Activated B cell treated with CpG ODN at 0.5 μM for 24 hours (primary cell): ENCODE measurements at regions of chrX and their contacts with region 1.

Region 1: GRCh38 chrX:70336767-70337166 is 46.9 kb downstream of the KIF4A start:
- DNase-seq: no peak
- ATAC-seq: peak; percentile 81
- H3K4me3 Mint-ChIP-seq: no peak overlapping the region
- H3K27ac Mint-ChIP-seq: no peak overlapping the region
- H3K4me1 Mint-ChIP-seq: peaks cover 6% of the 10 kb centered on the region
- H3K27me3 Mint-ChIP-seq: no peaks in the 10 kb centered on the region
- CTCF ChIP-seq: no peak

Region 2: DNA sequence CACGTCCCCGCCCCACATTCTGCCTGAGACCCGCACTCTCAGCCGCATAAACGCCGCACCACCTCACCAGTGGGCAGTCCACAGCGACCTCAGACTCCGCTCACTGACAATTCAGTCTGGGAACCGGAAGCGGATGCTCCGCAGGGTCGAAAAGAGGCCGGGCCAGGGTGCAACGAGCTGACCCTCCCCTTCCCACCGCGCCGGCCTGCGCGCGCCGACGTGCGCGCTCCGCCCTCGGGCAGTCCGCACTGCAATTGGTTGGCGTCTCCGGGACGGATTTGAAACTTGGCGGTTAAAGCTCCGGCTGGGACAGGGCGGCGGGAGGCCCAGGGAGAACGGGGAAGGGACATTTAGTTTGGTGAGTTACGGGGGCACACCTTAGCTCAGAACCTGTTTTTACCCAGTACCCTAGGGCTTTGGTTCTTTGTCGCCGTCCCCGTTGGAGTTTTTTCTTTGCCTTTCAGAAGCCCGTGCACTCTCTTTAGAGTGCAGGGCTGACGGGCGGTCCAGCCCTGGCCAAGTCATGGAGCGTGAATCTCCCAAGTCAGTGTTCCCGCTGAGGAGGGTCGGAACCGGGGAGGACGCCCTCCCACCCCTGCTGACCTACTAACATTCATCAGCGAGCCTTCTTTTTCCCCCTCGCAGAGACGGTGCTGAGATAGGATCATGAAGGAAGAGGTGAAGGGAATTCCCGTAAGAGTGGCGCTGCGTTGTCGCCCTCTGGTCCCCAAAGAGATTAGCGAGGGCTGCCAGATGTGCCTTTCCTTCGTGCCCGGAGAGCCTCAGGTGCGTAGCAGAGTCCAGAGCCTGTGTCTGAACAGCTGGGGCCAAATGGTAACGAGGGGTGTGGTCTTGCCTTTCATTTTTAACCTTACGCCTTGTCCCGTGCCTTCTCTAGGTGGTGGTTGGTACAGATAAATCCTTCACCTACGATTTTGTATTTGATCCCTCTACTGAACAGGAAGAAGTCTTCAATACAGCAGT is 46.7 kb before region 1 on chrX and contains the starts of genes KIF4A and PDZD11:
- CTCF ChIA-PET with region 1: no interaction called
- POLR2A ChIA-PET with region 1: no interaction called
- intact Hi-C with region 1: loop called (anchors 2 kb)
- DNase-seq: peak; percentile 67
- ATAC-seq: peak; percentile 100
- H3K4me3 Mint-ChIP-seq: peak within 1 kb of the TSS; percentile 86
- H3K27ac Mint-ChIP-seq: peak within 1 kb of the TSS; percentile 72
- H3K4me1 Mint-ChIP-seq: peaks cover 13% of the 10 kb centered on the region
- H3K27me3 Mint-ChIP-seq: no peaks in the 10 kb centered on the region
- CTCF ChIP-seq: no peak
- total RNA-seq, gene KIF4A: 0.49 TPM in 2 replicates
- total RNA-seq, gene PDZD11: 17.1 and 18.5 TPM in 2 replicates

Region 3: DNA sequence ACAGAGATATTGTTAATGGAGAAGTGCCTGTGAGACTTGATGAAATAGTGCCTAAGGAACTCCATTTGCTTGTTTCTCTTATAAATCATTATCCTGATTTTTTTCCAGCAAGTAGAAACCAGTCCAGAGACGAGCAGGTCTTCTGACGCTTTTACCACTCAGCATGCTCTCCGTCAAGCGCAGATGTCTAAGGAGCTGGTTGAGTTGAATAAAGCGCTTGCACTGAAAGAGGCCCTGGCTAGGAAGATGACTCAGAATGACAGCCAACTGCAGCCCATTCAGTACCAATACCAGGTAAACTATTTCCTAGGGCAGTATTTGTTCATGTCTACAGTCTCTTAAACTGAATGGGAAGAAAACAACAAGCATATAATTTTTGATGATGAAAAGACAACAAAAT is 16.7 kb after region 1 on chrX:
- CTCF ChIA-PET with region 1: no interaction called
- POLR2A ChIA-PET with region 1: no interaction called
- intact Hi-C with region 1: no loop called
- DNase-seq: no peak
- ATAC-seq: no peak
- H3K4me3 Mint-ChIP-seq: no peak overlapping the region
- H3K27ac Mint-ChIP-seq: no peak overlapping the region
- H3K4me1 Mint-ChIP-seq: no peaks in the 10 kb centered on the region
- H3K27me3 Mint-ChIP-seq: no peaks in the 10 kb centered on the region
- CTCF ChIP-seq: no peak

Region 4: GRCh38 chrX:70386235-70386634 is 49.5 kb after region 1 on chrX:
- CTCF ChIA-PET with region 1: no interaction called
- POLR2A ChIA-PET with region 1: no interaction called
- intact Hi-C with region 1: loop called (anchors 10 kb)
- DNase-seq: no peak
- ATAC-seq: no peak
- H3K4me3 Mint-ChIP-seq: no peak overlapping the region
- H3K27ac Mint-ChIP-seq: no peak overlapping the region
- H3K4me1 Mint-ChIP-seq: no peaks in the 10 kb centered on the region
- H3K27me3 Mint-ChIP-seq: no peaks in the 10 kb centered on the region
- CTCF ChIP-seq: no peak

Region 5: GRCh38 chrX:70398899-70399298 is 62.1 kb after region 1 on chrX:
- CTCF ChIA-PET with region 1: no interaction called
- POLR2A ChIA-PET with region 1: no interaction called
- intact Hi-C with region 1: no loop called
- DNase-seq: no peak
- ATAC-seq: no peak
- H3K4me3 Mint-ChIP-seq: no peak overlapping the region
- H3K27ac Mint-ChIP-seq: no peak overlapping the region
- H3K4me1 Mint-ChIP-seq: peaks cover 3% of the 10 kb centered on the region
- H3K27me3 Mint-ChIP-seq: no peaks in the 10 kb centered on the region
- CTCF ChIP-seq: no peak